CD8-positive, alpha-beta memory T cell (primary cell): ENCODE measurements at regions of chr15 and their contacts with region 1.

Region 1: DNA sequence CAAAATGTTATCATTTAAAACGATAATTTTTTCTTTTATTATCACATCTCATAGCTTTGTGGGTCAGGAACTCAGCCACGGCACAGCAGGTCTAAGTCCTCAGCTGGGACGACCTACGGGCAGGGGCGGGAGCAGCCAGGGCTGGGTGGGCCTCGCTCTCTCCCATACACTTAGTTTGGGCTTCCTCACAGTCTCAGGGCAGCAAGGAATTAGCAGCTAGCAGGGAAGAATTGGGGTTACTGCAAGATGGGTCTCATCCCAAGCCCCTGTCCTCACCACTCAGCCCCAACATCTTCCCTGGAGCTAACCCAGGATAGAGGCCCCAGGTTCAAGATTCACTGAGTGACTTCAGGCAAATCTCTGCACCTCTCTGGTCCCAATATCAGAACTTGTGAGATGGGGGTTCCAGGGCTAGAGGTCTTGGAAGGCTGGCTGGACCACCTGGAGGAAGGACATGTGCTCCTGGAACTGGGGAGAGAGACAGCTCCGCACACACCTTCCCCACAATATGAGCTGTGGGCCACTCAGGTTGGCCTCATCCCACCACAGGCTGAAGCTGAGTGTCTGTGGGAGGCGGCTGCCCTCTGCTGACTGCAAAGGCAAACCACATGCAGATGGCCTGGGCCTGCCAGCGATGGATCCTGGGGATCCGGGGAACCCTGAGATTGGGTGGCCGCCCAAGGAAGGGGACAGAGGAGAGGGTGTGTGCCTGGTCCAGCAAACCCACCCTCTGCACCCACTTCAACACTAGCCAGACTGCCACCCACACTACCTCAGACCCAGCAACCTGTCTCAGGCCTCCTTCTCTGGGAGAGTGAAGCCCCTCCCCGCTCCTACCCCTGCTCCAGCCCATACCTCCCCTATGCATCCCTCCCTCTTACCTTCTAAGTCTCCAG is 45.0 kb downstream of the CYP11A1 start:
- DNase-seq: peak; percentile 27 to 76 (median 39)
- H3K4me3 ChIP-seq: no peak overlapping the region
- H3K4me3 Mint-ChIP-seq: no peak overlapping the region
- H3K27ac ChIP-seq: no peak overlapping the region
- H3K27ac Mint-ChIP-seq: no peak overlapping the region
- H3K4me1 ChIP-seq: no peaks in the 10 kb centered on the region
- H3K4me1 Mint-ChIP-seq: peaks cover under 1 to 25% (median 3%) of the 10 kb centered on the region in 3 donors
- H3K27me3 ChIP-seq: no peaks in the 10 kb centered on the region
- H3K27me3 Mint-ChIP-seq: peaks cover 0 to 4% of the 10 kb centered on the region in 2 donors

Region 2: DNA sequence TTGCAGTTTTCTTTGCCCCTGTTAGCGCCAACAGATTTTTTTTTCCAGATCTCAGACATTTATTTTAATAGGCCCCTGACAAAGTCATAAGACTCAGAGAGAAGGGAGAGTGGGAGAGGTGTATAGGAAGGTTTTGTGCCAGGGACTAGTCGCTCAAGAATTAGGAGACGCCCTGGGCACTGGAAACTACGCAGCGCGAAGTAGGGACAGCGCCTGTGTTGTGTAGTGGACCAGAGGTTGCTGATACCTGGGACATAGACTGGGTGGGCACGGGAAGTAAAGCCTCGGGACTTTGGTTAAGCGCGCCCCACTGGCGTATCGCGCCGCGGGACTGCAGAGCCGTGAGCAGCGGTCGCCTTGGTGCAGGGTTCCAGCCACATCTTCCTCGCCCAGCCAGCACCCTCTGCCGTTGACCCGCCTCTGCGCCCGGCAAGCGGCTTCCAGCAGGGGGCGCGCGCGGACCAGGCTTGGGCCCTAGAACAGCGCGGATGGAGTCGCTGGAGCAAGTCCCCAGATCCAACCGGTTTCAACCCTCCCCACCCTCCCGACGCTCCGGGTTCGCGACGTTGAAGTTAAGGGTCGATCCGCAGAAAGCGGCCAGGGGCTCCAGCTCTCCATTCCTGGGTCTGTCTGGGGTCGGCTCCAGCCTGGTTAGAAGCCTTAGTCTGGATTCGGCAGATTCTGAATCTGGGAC is 195.0 kb before region 1 on chr15:
- CTCF ChIA-PET with region 1: interaction called, 74 read pairs
- POLR2A ChIA-PET with region 1: no interaction called
- DNase-seq: peak; percentile 64 to 83 (median 72)
- H3K4me3 ChIP-seq: no peak overlapping the region
- H3K4me3 Mint-ChIP-seq: peak overlapping the region in 5 of 7 donors; percentile 34 to 84 (median 45)
- H3K27ac ChIP-seq: no peak overlapping the region
- H3K27ac Mint-ChIP-seq: no peak overlapping the region
- H3K4me1 ChIP-seq: peaks cover 6% of the 10 kb centered on the region
- H3K4me1 Mint-ChIP-seq: peaks cover 0 to 31% (median 7%) of the 10 kb centered on the region in 3 donors
- H3K27me3 ChIP-seq: peaks cover 38% of the 10 kb centered on the region
- H3K27me3 Mint-ChIP-seq: peaks cover 29 to 80% of the 10 kb centered on the region in 2 donors

Region 3: GRCh38 chr15:74264081-74264501 is 58.3 kb before region 1 on chr15:
- CTCF ChIA-PET with region 1: no interaction called
- POLR2A ChIA-PET with region 1: interaction called, 10 read pairs
- DNase-seq: no peak
- H3K4me3 ChIP-seq: no peak overlapping the region
- H3K4me3 Mint-ChIP-seq: no peak overlapping the region
- H3K27ac ChIP-seq: no peak overlapping the region
- H3K27ac Mint-ChIP-seq: no peak overlapping the region
- H3K4me1 ChIP-seq: no peaks in the 10 kb centered on the region
- H3K4me1 Mint-ChIP-seq: no peaks in the 10 kb centered on the region
- H3K27me3 ChIP-seq: peaks cover 4% of the 10 kb centered on the region
- H3K27me3 Mint-ChIP-seq: peaks cover 22 to 58% of the 10 kb centered on the region in 2 donors